RWPE1 (cell line): ENCODE measurements at regions of chr10 and their contacts with region 1.

Region 1: GRCh38 chr10:26881600-26882331 is 21.0 kb upstream of the ABI1 start:
- DNase-seq: peak; percentile 63
- H3K27ac ChIP-seq: no peak overlapping the region
- CTCF ChIP-seq: peak; percentile 81

Region 2: GRCh38 chr10:26725837-26726727 is 155.7 kb before region 1 on chr10:
- CTCF ChIA-PET with region 1: interaction called, 47 read pairs
- POLR2A ChIA-PET with region 1: no interaction called
- DNase-seq: peak; percentile 55
- H3K27ac ChIP-seq: no peak overlapping the region
- CTCF ChIP-seq: peak; percentile 83

Region 3: DNA sequence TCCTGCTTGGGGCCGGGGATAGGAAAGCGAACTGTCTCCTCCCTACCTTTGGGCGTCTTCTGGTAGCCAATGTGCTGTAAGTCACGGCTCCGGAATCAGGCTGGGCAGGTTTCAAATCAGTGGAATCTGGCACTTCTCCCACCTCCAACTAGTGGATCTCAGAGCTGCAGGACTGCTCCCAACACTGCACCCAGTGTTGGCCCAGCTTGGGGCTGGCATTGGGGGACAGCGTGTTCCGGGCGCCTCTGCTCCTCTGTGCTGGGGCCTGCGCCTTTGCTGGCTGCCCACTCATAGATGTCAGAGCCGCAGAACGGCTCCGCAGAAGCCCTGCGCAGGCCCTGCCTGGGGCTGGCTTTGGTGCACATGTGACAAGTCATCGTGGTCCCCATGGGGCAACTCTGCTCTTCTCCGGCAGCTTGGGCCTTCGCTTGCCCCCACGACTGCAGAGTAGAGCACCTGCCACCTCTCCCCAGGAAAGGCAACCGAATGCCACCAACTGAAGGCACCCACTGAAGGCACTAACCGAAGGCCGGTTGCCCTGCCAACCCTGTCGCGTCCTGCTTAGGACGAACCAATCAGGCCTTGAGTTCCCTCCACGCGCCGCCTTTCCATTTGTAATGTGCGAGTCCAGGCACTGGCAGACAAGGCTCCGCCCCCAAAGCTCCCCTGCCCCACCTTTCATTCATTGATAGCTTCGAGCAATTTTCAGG is 64.5 kb after region 1 on chr10:
- CTCF ChIA-PET with region 1: no interaction called
- POLR2A ChIA-PET with region 1: no interaction called
- DNase-seq: peak; percentile 21
- H3K27ac ChIP-seq: no peak overlapping the region
- CTCF ChIP-seq: no peak

Region 4: DNA sequence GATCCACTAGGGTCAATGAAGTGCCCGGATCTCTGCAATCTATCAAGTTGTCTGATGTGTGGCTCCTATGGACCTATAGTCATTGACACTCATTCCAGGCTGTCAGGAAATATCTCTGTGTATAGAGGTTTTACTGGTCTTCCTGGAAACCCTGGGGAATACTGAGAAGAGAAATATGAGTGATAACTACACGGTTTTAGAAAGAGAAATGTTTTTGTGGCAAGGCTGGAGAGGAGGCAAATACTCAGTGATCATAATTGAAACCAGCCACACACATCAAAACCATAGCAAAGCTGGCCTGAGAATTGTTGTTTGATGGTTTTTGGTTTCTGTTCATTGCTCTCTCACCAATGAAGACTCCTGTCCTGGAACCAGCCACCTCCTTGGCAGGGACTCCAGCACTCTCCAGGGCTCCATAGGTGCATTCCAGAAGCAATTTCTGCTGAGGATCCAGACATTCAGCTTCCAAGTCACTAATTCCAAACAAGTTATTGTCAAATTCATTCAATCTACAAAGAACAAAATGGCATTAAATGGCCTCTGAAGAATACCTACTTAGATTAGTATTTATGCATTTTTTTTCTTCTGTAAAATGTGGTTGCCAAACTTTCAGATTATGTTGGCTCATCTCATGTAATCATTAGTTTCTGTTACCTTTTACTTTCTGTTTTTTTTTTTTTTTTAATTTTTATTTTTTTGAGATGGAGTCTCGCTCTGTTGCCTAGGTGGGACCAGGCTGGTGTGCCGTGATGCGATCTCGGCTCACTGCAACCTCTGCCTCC is 87.6 kb after region 1 on chr10:
- CTCF ChIA-PET with region 1: no interaction called
- POLR2A ChIA-PET with region 1: no interaction called
- DNase-seq: no peak
- H3K27ac ChIP-seq: no peak overlapping the region
- CTCF ChIP-seq: no peak